Aorta (tissue), 5 donors: ENCODE measurements at regions of chr1 and their contacts with region 1.

Region 1: DNA sequence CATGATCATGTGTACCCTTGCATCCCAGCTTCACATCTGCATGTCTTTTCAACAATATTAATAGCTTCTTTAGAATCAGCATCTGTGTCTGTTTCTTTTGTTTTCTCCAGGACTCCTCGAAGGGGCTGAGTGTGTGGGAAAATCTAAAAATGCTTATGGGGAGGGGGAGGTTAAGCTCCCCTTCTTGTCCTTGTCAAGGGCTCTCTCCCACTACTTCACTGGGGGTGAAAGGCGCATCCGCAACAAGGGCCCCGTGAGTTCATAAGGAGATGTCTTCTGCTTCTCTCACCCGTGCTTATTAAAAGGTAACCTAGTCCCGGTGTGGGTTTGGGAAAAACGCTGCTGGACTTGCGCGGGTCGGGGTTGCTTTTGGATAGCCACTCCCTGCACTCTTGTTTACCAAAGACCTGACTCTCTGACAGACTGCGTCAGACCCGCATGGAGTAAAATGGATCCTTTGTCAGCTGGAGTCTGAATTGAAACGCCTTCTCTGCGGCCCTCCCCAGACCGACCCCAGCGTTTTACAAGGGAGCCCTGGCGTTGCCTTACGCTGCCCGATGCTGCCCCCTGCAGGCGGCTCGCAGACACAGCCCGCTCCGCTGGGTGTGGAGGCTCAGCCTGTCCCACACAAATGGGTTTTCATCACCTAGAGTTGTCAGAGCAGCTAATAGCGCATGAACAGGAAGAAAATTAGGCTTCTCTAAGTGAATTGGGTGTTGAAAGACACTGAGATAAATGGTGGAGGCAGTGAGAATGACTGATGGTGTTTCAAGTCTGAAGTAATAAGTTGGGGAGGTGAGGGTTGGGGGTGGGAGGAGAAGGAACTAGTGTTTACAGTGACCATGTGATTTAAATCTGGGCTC is 53.8 kb downstream of the IER5 start:
- DNase-seq: peak; percentile 90 to 97
- ATAC-seq: peak; percentile 96
- H3K4me3 ChIP-seq: no peak overlapping the region
- H3K27ac ChIP-seq: no peak overlapping the region
- H3K4me1 ChIP-seq: no peaks in the 10 kb centered on the region
- H3K27me3 ChIP-seq: no peaks in the 10 kb centered on the region

Region 2: GRCh38 chr1:180912801-180913565 is 229.3 kb before region 1 on chr1 and contains the start of gene KIAA1614:
- intact Hi-C with region 1: loop called in 1 of 2 experiments (anchors 5 kb)
- DNase-seq: peak; percentile 63 to 85
- ATAC-seq: peak; percentile 80
- H3K4me3 ChIP-seq: peak within 1 kb of the TSS; percentile 67 to 76
- H3K27ac ChIP-seq: peak within 1 kb of the TSS; percentile 79 to 84
- H3K4me1 ChIP-seq: no peaks in the 10 kb centered on the region
- H3K27me3 ChIP-seq: no peaks in the 10 kb centered on the region
- total RNA-seq, gene KIAA1614: 9.8 to 10.5 TPM

Region 3: DNA sequence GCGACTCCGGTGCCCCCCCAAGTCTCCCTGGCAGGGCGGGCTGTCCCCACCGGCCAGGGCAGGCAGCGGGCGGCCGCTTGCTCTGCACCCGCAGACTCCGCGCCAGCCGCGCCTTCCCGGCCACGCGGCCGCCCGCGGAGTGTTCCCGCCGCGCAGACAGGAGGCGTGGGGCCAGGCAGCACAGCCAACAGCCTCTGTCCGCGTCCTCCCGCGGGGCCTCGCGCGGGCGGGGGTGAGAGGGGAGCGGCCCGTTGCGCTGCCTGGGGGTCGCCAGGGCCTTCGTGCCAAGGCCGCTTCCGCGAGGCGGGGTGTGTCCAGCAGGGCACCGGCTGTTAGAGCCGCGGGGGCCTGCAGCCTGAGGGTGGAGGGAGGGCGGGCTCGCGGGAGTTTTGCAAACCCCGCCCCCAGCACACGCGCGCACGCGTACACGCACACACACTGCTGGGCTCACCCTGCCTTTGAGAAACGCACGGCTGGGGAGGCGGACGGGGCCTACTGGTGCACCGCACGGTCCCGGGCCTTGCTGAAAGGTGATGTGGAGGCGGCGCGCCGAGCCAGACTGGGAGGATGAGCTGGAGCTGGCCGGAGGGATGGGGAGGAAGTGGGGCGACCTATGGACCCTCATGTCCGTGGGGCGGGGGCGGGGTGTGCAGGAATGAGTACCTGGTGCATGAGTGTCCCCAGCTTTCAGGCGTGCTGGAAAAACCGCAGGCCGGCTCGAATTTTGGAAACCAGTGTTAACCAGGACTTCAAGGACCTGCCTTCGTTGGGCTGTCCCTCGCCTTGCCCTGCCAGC is 188.1 kb before region 1 on chr1:
- intact Hi-C with region 1: loop called in 1 of 2 experiments (anchors 10 kb)
- DNase-seq: peak; percentile 80 to 91
- ATAC-seq: peak; percentile 81
- H3K4me3 ChIP-seq: peak overlapping the region; percentile 22 to 35
- H3K27ac ChIP-seq: no peak overlapping the region
- H3K4me1 ChIP-seq: no peaks in the 10 kb centered on the region
- H3K27me3 ChIP-seq: no peaks in the 10 kb centered on the region

Region 4: DNA sequence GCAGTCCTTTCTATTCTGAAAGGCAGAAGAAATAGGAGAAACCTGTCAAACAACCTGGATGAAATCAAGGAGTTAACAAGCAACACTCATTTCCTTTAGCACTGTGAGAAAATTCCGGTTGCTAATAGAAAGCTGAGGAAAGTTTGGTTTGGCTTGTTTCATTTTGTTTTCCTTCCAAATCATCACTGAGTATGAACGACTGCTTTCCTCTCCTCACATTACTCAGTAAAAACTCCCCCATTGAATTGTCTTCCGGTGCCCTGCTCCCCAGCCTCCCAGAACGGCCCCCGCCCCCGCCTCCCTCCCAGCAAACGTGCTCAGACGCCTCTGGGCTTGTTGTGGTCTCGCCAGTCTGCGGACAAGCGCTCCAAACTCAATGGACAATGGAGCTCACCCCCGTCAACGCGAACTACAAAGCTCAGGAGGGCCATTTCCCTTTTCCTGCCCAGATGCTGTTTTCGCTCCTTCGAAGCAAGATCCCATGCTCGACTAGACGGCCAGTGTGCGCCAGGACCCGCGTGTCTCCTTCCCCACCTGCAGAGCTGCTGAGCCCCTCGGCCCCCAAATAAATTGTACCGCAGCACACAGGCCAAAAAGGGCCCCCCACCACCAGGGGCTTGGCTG is 120.4 kb before region 1 on chr1:
- intact Hi-C with region 1: loop called (anchors 5 kb)
- DNase-seq: peak; percentile 76 to 89
- ATAC-seq: peak; percentile 76
- H3K4me3 ChIP-seq: peak overlapping the region; percentile 50 to 76
- H3K27ac ChIP-seq: peak overlapping the region; percentile 0 to 65
- H3K4me1 ChIP-seq: no peaks in the 10 kb centered on the region
- H3K27me3 ChIP-seq: no peaks in the 10 kb centered on the region

Region 5: DNA sequence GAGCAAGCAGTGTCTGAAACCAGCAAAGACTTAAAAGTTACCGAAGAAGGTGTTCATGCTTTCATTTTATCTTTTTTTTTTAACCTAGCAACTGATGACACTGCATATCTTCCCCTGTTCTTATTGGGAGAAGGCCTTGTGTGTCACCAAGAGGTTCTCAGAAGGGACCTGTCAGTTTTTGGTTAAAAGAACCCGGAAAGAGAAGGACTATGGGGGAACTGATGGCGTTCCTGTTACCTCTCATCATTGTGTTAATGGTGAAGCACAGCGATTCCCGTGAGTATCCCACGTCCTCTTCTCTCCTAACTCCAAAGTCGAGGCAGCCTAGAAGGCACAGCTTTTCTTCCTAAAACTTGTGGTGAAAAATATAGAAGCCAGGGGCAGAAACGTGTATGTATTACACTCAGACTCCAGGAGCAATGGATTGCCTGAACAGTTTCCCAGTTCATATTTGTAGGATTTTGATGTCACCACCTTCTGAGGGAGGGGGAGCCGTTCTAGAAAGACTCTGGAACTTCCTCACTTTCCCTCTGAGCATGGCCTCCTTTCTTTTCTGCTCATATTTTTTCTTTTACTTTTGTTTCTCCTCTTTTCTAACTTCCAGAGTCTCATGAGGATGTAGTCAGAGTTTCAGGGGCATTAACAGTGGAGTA is 108.4 kb before region 1 on chr1 and contains the start of gene MR1:
- intact Hi-C with region 1: loop called in 1 of 2 experiments (anchors 2 kb)
- DNase-seq: no peak
- ATAC-seq: peak; percentile 96
- H3K4me3 ChIP-seq: peak within 1 kb of the TSS; percentile 72 to 74
- H3K27ac ChIP-seq: peak within 1 kb of the TSS; percentile 99 to 100
- H3K4me1 ChIP-seq: peaks cover 6 to 7% of the 10 kb centered on the region in 2 donors
- H3K27me3 ChIP-seq: no peaks in the 10 kb centered on the region
- total RNA-seq, gene MR1: 22.0 to 23.9 TPM

Region 6: DNA sequence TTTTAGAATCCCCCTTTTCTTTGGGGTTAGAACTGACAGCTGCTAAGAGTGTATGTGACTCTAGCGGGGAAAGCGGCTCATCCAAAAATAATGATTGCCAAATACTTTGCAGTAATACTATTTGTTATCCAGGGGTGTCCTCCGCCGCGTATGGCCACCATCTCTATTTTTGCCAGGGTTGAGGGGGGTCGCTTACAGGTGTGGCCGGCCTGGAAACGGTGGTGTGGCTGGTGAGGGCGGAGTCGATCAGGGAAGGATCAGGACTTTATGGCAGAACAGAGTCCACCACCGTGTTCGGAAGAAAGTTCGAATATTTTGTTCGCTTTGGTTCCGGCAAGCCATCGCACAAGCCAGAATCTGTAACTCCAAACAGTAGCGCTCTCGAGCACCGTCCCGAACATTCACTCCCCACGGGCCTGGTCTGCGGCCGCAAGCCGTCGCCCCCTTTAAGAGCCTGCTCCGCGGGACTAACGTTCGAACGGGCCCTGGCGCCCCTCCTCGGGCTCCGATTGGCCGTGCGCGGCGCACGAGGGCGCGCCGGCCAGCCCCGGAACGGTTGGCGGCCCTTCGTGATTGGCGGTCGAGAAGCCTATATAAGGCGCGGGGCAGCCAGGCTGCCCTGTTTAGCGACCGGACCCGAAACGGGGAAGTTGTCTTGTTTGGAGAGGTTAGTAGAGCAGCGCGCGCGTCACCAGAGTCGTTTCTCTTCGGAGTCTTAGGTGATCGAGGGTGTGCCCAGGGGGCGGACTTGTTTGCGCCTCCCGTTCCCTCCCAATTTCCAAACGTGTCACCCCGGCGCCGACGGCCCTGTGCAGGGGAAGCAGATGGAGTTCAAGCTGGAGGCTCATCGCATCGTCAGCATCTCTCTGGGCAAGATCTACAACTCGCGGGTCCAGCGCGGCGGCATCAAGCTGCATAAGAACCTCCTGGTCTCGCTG is 54.0 kb before region 1 on chr1 and contains the start of gene IER5:
- intact Hi-C with region 1: loop called (anchors 1 to 2 kb)
- DNase-seq: peak; percentile 97 to 98
- ATAC-seq: peak; percentile 98
- H3K4me3 ChIP-seq: peak within 1 kb of the TSS; percentile 65 to 99
- H3K27ac ChIP-seq: peak within 1 kb of the TSS; percentile 50 to 81
- H3K4me1 ChIP-seq: peaks cover 2 to 3% of the 10 kb centered on the region in 2 donors
- H3K27me3 ChIP-seq: no peaks in the 10 kb centered on the region
- total RNA-seq, gene IER5: 11.4 to 42.2 TPM

Region 7: DNA sequence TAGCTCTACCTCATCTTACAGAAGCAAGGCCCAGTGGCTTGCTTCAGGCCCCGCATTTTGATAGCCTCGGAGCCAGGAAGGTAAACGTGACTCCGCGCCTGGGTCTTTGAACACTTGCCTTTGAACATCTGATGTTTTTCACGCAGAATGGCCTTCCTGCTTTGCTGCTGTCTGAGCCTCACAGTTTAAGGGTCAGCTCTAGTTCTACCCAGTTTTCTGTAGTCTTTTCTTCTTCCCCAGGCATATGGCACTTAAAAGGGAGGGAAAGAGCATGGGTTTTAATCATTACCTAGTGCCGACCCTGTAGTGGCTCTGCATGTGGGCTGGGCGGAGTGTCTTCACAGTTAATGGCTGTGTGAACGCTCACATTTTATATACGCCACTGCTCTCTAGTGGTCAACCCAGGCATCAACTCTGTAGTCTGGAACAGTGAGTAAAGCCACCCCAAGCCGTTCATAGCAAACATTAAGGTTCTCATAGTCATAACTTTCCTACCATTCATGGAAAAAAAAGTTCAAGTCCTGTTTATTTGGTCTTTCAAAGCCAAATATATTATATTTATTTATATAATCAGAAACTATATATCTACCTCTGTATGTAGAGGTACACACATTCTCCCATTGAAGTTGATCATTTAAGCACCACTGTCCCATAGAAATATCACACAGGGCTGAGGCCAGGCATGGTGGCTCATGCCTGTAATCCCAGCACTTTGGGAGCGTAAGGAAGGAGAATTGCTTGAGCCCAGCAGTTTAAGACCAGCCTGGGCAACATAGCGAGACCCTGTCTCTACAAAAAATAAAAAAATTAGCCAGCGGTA is 24.3 kb after region 1 on chr1:
- intact Hi-C with region 1: loop called in 1 of 2 experiments (anchors 1 kb)
- DNase-seq: peak; percentile 75 to 79
- ATAC-seq: peak; percentile 92
- H3K4me3 ChIP-seq: no peak overlapping the region
- H3K27ac ChIP-seq: no peak overlapping the region
- H3K4me1 ChIP-seq: no peaks in the 10 kb centered on the region
- H3K27me3 ChIP-seq: no peaks in the 10 kb centered on the region